Endothelial cell of umbilical vein (primary cell): ENCODE measurements at regions of chr3 and their contacts with region 1.

Region 1: DNA sequence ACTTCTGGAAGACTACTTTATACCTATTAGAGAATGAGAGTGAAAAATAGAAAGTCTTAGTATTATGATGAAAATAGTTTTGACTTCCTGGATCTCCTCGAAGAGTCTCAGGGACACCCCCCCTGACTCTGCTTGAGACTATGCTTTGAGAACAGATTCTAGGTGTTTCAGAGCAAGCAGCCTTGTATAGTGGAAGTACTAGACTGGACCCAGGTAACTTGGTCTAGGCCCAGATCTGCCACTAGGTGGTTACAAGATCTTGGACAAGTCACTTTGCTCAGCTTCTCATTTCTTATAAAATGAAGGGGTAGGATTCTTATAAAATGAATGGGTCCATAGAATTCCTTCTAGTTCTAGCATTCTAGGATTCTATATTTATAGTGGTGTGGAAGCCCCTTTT is 9.1 kb downstream of the ABHD5 start:
- DNase-seq: peak; percentile 26
- H3K4me3 ChIP-seq: no peak overlapping the region
- H3K27ac ChIP-seq: no peak overlapping the region
- H3K4me1 ChIP-seq: no peaks in the 10 kb centered on the region
- H3K27me3 ChIP-seq: no peaks in the 10 kb centered on the region
- CTCF ChIP-seq: peak; percentile 17 to 42
- POLR2A ChIP-seq: no peak

Region 2: GRCh38 chr3:43684944-43685343 is 14.9 kb before region 1 on chr3:
- CTCF ChIA-PET with region 1: no interaction called
- POLR2A ChIA-PET with region 1: no interaction called
- dilution Hi-C with region 1: no loop called
- intact Hi-C with region 1: no loop called
- DNase-seq: no peak
- H3K4me3 ChIP-seq: no peak overlapping the region
- H3K27ac ChIP-seq: no peak overlapping the region
- H3K4me1 ChIP-seq: no peaks in the 10 kb centered on the region
- H3K27me3 ChIP-seq: peaks cover 0 to 1% of the 10 kb centered on the region in 2 experiments
- CTCF ChIP-seq: no peak
- POLR2A ChIP-seq: no peak

Region 3: DNA sequence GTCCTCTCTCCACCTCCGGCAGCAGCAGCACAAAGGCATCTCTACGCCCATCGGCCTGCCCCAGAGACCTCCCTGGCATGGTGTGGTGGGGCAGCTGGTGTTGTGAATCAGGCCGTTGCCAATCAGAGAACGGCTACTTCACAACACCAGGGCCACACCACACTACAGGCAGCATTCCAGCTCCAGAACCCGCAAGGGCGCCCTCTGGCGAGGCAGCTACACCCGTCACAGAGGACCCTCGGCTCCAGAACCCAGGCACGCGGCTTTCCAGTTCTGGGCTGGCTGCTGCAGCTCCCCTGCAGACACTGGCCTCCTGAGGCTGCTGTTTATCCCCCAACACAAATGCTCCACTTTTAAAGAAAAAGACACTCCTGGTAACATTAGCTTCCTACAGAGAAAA is 414.3 kb after region 1 on chr3:
- CTCF ChIA-PET with region 1: interaction called, 3 read pairs
- POLR2A ChIA-PET with region 1: no interaction called
- dilution Hi-C with region 1: no loop called
- intact Hi-C with region 1: loop called (anchors 2 kb)
- DNase-seq: peak; percentile 34
- H3K4me3 ChIP-seq: no peak overlapping the region
- H3K27ac ChIP-seq: no peak overlapping the region
- H3K4me1 ChIP-seq: no peaks in the 10 kb centered on the region
- H3K27me3 ChIP-seq: peaks cover 0 to 2% of the 10 kb centered on the region in 2 experiments
- CTCF ChIP-seq: peak; percentile 37 to 79
- POLR2A ChIP-seq: no peak